Heart right ventricle (tissue), 16 donors: ENCODE measurements at regions of chr15 and their contacts with region 1.

Region 1: GRCh38 chr15:47717036-47717611 is at the start of gene SEMA6D:
- DNase-seq: peak; percentile 72 to 83
- ATAC-seq: peak; percentile 77 to 90 (median 82)
- H3K4me3 ChIP-seq: peak within 1 kb of the TSS; percentile 70 to 98 (median 88)
- H3K27ac ChIP-seq: peak within 1 kb of the TSS; percentile 73 to 94 (median 89)
- H3K4me1 ChIP-seq: peaks cover 0 to 48% (median 20%) of the 10 kb centered on the region in 9 donors
- H3K27me3 ChIP-seq: peaks cover 0 to 63% (median 0%) of the 10 kb centered on the region in 7 donors
- CTCF ChIP-seq: peak; percentile 21 to 77 (median 48)
- total RNA-seq, gene SEMA6D: 4.6 to 20.1 (median 12.9) TPM

Region 2: GRCh38 chr15:47473832-47474231 is 243.3 kb before region 1 on chr15:
- intact Hi-C with region 1: loop called in 3 of 10 experiments (anchors 5 to 10 kb)
- DNase-seq: peak; percentile 57 to 80
- ATAC-seq: peak; percentile 93 to 98 (median 96)
- H3K4me3 ChIP-seq: peak overlapping the region in 1 of 10 donors; percentile 8
- H3K27ac ChIP-seq: peak overlapping the region in 8 of 10 donors; percentile 2 to 69 (median 46)
- H3K4me1 ChIP-seq: peaks cover 0 to 35% (median 21%) of the 10 kb centered on the region in 9 donors
- H3K27me3 ChIP-seq: no peaks in the 10 kb centered on the region
- CTCF ChIP-seq: no peak

Region 3: DNA sequence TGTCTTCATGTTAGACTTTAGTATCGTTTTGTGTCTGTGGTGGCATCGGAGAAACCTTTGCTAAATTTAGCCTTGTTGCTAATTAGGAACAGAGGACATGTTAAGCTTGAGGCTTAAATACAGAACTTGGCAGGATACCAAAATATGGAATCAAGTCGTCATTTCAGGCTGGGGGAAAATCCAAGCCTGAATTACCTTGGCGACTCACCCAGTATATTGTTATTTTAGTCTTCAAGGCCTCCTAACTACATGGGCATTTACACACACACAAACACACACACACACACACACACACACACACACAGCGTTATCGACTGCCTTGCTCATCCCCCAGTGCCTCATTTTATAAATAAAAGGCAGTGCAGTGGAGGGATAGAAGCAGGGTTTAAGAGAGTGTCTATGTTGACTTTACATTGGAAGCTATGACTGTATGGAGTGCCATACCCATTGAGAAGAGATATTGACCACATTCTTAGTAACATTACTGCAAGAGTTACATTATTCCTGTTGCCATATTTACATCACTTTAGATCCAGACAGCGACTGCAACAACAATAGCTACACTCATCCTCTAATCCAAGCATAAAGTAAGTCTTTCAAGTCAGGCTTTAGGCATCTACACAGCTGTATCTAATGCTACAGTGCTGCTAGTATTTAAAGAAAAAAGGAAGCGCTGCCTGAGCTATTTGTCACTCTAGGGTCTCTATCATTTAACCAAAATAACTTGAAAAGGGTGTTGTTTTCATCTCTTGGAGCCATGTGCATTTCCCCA is 210.6 kb before region 1 on chr15:
- intact Hi-C with region 1: loop called in 6 of 10 experiments (anchors 5 to 10 kb)
- DNase-seq: peak in 1 of 2 donors; percentile 27
- ATAC-seq: peak; percentile 36 to 92 (median 86)
- H3K4me3 ChIP-seq: no peak overlapping the region
- H3K27ac ChIP-seq: peak overlapping the region in 8 of 10 donors; percentile 26 to 72 (median 57)
- H3K4me1 ChIP-seq: peaks cover 6 to 48% (median 24%) of the 10 kb centered on the region in 9 donors
- H3K27me3 ChIP-seq: peaks cover 0 to 10% (median 0%) of the 10 kb centered on the region in 7 donors
- CTCF ChIP-seq: no peak

Region 4: DNA sequence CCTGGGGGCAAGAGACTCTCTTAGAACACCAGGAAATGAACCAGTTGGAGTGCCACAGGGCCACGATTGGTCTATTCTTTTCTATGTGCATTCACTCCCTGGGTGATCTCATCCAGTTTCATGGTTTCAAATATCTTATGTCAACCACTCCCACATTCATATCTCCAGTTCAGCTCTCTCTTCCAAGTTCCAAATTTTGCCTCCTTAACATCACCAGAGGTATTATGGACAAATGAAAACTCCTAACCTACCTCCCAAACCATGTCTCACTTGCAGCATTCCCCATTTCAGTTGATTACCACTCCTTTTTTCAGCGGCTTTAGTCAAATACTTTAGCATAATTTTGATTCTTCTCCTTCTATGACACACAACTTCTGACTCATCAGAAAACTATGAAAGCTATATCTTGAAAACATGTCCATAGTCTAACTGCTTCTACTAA is 202.9 kb before region 1 on chr15:
- intact Hi-C with region 1: loop called in 6 of 10 experiments (anchors 5 to 10 kb)
- DNase-seq: no peak
- ATAC-seq: no peak
- H3K4me3 ChIP-seq: no peak overlapping the region
- H3K27ac ChIP-seq: no peak overlapping the region
- H3K4me1 ChIP-seq: peaks cover 0 to 24% (median 20%) of the 10 kb centered on the region in 9 donors
- H3K27me3 ChIP-seq: peaks cover 0 to 72% (median 0%) of the 10 kb centered on the region in 7 donors
- CTCF ChIP-seq: no peak

Region 5: DNA sequence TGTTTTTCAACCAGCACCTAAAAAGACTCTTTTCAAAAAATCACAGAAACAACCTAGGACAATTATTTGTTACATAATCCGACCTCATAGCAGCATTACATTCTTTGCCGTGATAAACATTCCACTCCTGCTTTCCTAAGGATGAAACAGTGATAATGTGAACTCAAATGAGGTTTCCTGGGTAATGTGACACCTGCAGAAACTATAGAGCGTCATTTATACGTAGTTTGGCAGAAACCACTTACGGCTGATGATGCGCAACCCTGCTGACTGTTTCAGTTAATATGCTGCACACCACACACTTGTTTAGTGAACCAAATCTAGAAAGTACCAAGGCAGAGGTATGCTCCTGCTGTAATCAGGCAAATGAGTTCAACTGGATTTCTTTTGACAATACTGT is 56.0 kb after region 1 on chr15:
- intact Hi-C with region 1: no loop called
- DNase-seq: no peak
- ATAC-seq: no peak
- H3K4me3 ChIP-seq: no peak overlapping the region
- H3K27ac ChIP-seq: no peak overlapping the region
- H3K4me1 ChIP-seq: peaks cover 0 to 7% (median 0%) of the 10 kb centered on the region in 9 donors
- H3K27me3 ChIP-seq: no peaks in the 10 kb centered on the region
- CTCF ChIP-seq: no peak

Region 6: DNA sequence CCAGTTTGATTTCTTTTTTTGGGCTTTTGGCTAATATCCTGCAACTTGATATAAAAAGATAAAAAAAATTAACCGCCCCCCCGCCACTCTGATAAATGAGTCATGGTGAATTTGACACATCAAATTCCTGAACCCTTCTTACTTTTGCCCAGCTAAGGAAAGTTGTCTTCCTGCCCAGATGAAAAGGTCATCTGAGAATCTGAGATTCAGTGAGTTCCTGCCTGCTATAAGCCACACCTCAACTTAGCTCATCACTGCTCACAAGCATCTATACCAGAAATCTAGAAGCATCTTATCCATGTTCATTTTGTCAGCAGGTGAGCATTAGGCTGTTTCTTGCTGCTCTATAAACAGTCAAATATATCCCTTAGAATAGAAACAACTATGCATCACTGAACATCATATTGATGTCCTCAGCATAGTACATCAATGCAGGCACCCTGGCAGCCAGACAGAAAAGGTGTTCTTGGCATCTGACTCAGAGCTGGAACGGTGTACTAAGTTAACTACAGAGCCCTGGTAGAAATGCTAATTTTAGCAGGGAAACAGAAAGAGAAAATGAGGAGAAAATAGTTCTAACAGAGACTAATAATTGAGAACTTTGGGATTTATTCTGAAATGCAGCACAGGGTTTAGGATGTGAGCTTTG is 77.3 kb after region 1 on chr15:
- intact Hi-C with region 1: loop called in 2 of 10 experiments (anchors 10 kb)
- DNase-seq: no peak
- ATAC-seq: peak in 2 of 8 donors; percentile 40 to 59
- H3K4me3 ChIP-seq: no peak overlapping the region
- H3K27ac ChIP-seq: no peak overlapping the region
- H3K4me1 ChIP-seq: peaks cover 0 to 37% (median 20%) of the 10 kb centered on the region in 9 donors
- H3K27me3 ChIP-seq: no peaks in the 10 kb centered on the region
- CTCF ChIP-seq: no peak

Region 7: GRCh38 chr15:47870956-47871625 is 154.0 kb after region 1 on chr15:
- intact Hi-C with region 1: loop called in 1 of 10 experiments (anchors 10 kb)
- DNase-seq: no peak
- ATAC-seq: peak in 3 of 8 donors; percentile 19 to 59 (median 47)
- H3K4me3 ChIP-seq: no peak overlapping the region
- H3K27ac ChIP-seq: no peak overlapping the region
- H3K4me1 ChIP-seq: peaks cover 0 to 32% (median 12%) of the 10 kb centered on the region in 9 donors
- H3K27me3 ChIP-seq: no peaks in the 10 kb centered on the region
- CTCF ChIP-seq: no peak